ENCODE measurements at regions of chr11 and their contacts with region 1.

Region 1: GRCh38 chr11:86869966-86870570 is 69.7 kb downstream of the PRSS23 start:
- DNase-seq: peak in 3 of 4 donors; percentile 54 to 76 (median 56)
- ATAC-seq: peak; percentile 97
- H3K4me3 ChIP-seq: no peak overlapping the region
- H3K27ac ChIP-seq: no peak overlapping the region
- H3K4me1 ChIP-seq: no peaks in the 10 kb centered on the region
- H3K27me3 ChIP-seq: no peaks in the 10 kb centered on the region
- CTCF ChIP-seq: peak; percentile 67 to 75

Region 2: DNA sequence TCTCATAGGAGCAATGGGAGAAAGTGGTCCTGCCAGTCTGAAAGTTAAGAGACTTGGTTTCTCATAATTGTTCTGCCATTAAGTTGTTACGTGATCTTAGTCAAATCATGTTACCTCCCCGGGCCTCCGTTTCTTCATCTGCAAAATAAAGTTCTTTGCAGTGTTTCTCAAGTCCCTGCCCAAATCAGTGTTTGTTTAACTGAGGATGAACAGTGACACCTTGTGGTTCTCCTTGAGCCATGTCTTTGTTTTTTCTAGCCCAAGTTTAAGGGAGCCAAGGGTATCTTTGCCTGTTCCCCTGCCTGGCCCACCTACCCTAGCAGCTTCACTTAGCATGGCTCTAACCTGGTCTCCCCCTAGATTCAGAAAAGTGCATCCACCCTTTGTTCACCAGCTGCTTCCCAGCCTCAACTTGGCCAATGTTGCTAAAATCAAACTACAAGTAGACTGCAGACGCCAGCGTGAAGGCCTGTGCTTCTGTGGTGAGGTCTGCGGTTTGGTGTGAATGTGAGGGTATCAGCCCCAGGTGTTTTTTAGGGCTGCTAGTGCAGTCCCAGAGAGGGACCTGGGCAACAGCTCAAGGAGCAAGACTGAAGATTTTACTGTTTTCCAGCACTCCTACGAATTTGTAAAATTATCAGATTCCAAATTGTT is 49.6 kb after region 1 on chr11:
- intact Hi-C with region 1: loop called in 1 of 2 experiments (anchors 5 kb)
- DNase-seq: peak in 1 of 4 donors; percentile 66
- ATAC-seq: peak; percentile 83
- H3K4me3 ChIP-seq: no peak overlapping the region
- H3K27ac ChIP-seq: peak overlapping the region in 1 of 2 donors; percentile 34
- H3K4me1 ChIP-seq: peaks cover 0 to 3% of the 10 kb centered on the region in 2 donors
- H3K27me3 ChIP-seq: no peaks in the 10 kb centered on the region
- CTCF ChIP-seq: peak in 1 of 2 donors; percentile 51

Region 3: DNA sequence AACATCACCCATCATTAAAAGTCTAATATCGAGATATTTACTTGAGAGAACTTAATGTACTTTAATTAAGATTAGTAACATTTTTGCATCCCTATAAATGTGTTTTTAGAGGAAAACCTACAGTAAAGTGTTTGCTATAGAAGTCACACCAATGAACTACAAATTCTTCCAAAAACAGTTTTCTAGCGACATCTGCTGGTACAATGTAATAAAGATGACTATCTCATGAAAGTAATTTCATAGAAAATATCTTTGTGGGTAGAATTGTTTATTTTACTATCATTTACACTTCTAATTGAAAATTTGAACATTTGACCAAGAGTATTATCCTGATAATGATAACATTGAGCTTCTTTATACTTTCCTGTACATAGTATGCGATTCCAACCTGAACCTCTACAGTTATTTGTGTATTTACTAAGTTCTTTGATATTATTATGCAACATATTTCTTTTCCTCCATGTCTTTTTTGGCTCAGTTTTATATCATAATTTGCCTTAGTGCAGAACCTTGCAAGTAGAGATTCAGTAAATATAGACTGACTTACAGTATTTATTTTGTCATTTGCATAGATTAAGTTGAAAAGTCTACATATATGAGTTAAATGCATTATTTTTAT is 420.3 kb after region 1 on chr11:
- intact Hi-C with region 1: loop called in 1 of 2 experiments (anchors 5 kb)
- DNase-seq: peak in 2 of 4 donors; percentile 58 to 67
- ATAC-seq: peak; percentile 63
- H3K4me3 ChIP-seq: no peak overlapping the region
- H3K27ac ChIP-seq: no peak overlapping the region
- H3K4me1 ChIP-seq: no peaks in the 10 kb centered on the region
- H3K27me3 ChIP-seq: no peaks in the 10 kb centered on the region
- CTCF ChIP-seq: peak; percentile 34 to 49